Panc1 (cell line): ENCODE measurements at regions of chr19 and their contacts with region 1.

Region 1: GRCh38 chr19:10730923-10731322 is 13.0 kb downstream of the DNM2 start:
- DNase-seq: no peak
- ATAC-seq: 0 out of 2 replicates have a peak, but pooled peaks have one; percentile 43
- H3K4me3 ChIP-seq: no peak overlapping the region
- H3K27ac ChIP-seq: no peak overlapping the region
- H3K4me1 ChIP-seq: no peaks in the 10 kb centered on the region
- H3K27me3 ChIP-seq: no peaks in the 10 kb centered on the region
- CTCF ChIP-seq: no peak

Region 2: GRCh38 chr19:10742476-10742875 is 11.6 kb after region 1 on chr19:
- CTCF ChIA-PET with region 1: no interaction called
- POLR2A ChIA-PET with region 1: interaction called, 13 read pairs
- in situ Hi-C with region 1: no loop called
- intact Hi-C with region 1: no loop called
- DNase-seq: no peak
- ATAC-seq: no peak; the same call in 1 of the 2 replicates
- H3K4me3 ChIP-seq: no peak overlapping the region
- H3K27ac ChIP-seq: no peak overlapping the region
- H3K4me1 ChIP-seq: peaks cover 16% of the 10 kb centered on the region
- H3K27me3 ChIP-seq: no peaks in the 10 kb centered on the region
- CTCF ChIP-seq: no peak